ENCODE measurements at regions of chr10 and their contacts with region 1.

Region 1: GRCh38 chr10:73358331-73359279 is at the start of gene CFAP70:
- DNase-seq: peak; percentile 79 to 97 (median 95)
- ATAC-seq: peak; percentile 97
- H3K4me3 ChIP-seq: peak within 1 kb of the TSS; percentile 70
- H3K4me3 Mint-ChIP-seq: peak within 1 kb of the TSS; percentile 91 to 99 (median 94)
- H3K27ac ChIP-seq: peak within 1 kb of the TSS; percentile 85
- H3K27ac Mint-ChIP-seq: peak within 1 kb of the TSS; percentile 92 to 99 (median 97)
- H3K4me1 ChIP-seq: peaks cover 4 to 5% of the 10 kb centered on the region in 2 donors
- H3K4me1 Mint-ChIP-seq: peaks cover 11 to 20% (median 18%) of the 10 kb centered on the region in 7 donors
- H3K27me3 ChIP-seq: no peaks in the 10 kb centered on the region
- H3K27me3 Mint-ChIP-seq: peaks cover 0 to 23% (median 0%) of the 10 kb centered on the region in 5 donors
- total RNA-seq, gene CFAP70: 0.80 to 5.4 (median 4.6) TPM

Region 2: DNA sequence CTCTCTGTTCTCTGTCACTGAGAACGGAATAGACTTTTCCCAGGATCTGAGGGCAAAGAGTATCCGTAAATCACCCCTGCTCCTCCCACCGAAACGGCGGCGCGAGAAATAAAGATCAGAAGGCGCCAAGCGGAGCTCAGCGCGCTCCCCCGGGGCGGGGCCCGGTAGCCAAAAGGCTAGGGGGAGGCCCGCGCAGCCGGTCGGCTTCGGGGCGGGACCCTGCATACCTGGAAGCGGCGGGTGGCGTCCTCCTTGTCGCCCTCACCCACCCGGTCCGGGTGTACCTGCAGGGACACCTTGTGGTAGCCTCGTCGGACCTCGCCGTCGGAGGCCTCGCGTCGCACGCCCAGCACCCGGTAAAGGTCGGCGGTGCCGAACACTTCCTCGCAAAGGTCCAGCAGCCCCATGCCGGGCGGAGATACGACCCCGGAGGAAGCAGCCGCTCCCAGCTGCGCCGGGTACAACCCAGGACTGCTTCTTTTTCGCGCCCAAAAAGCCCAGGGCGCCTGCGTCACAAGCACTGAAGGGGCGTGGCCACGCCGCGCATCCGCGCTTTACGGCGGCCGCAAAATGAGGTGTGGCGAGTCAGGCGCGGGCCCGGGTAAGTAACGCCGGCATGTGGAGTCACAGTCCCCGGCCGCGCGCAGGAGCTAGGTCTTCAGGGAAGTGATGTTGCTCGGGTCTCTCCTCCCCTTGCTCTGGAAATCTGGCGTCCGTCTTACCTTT is 111.7 kb before region 1 on chr10 and contains the start of gene DNAJC9:
- CTCF ChIA-PET with region 1: no interaction called
- POLR2A ChIA-PET with region 1: interaction called, 13 read pairs
- intact Hi-C with region 1: loop called (anchors 1 to 2 kb)
- DNase-seq: peak; percentile 93 to 98 (median 96)
- ATAC-seq: peak; percentile 95
- H3K4me3 ChIP-seq: peak within 1 kb of the TSS; percentile 71
- H3K4me3 Mint-ChIP-seq: peak within 1 kb of the TSS; percentile 92 to 100 (median 97)
- H3K27ac ChIP-seq: peak within 1 kb of the TSS; percentile 86
- H3K27ac Mint-ChIP-seq: peak within 1 kb of the TSS; percentile 91 to 98 (median 96)
- H3K4me1 ChIP-seq: peaks cover 27 to 37% of the 10 kb centered on the region in 2 donors
- H3K4me1 Mint-ChIP-seq: peaks cover 30 to 69% (median 55%) of the 10 kb centered on the region in 7 donors
- H3K27me3 ChIP-seq: no peaks in the 10 kb centered on the region
- H3K27me3 Mint-ChIP-seq: no peaks in the 10 kb centered on the region
- total RNA-seq, gene DNAJC9: 14.5 to 47.7 (median 26.8) TPM

Region 3: GRCh38 chr10:73252445-73253224 is 106.0 kb before region 1 on chr10 and contains the start of gene MRPS16:
- CTCF ChIA-PET with region 1: no interaction called
- POLR2A ChIA-PET with region 1: interaction called, 13 read pairs
- intact Hi-C with region 1: loop called (anchors 1 to 2 kb)
- DNase-seq: peak; percentile 75 to 95 (median 93)
- ATAC-seq: peak; percentile 98
- H3K4me3 ChIP-seq: peak within 1 kb of the TSS; percentile 94
- H3K4me3 Mint-ChIP-seq: peak within 1 kb of the TSS; percentile 95 to 100 (median 99)
- H3K27ac ChIP-seq: peak within 1 kb of the TSS; percentile 92
- H3K27ac Mint-ChIP-seq: peak within 1 kb of the TSS; percentile 91 to 97 (median 94)
- H3K4me1 ChIP-seq: peaks cover 18 to 26% of the 10 kb centered on the region in 2 donors
- H3K4me1 Mint-ChIP-seq: peaks cover 19 to 50% (median 37%) of the 10 kb centered on the region in 7 donors
- H3K27me3 ChIP-seq: no peaks in the 10 kb centered on the region
- H3K27me3 Mint-ChIP-seq: peaks cover 0 to 2% (median 0%) of the 10 kb centered on the region in 5 donors
- total RNA-seq, gene MRPS16: 29.6 to 99.9 (median 47.6) TPM

Region 4: DNA sequence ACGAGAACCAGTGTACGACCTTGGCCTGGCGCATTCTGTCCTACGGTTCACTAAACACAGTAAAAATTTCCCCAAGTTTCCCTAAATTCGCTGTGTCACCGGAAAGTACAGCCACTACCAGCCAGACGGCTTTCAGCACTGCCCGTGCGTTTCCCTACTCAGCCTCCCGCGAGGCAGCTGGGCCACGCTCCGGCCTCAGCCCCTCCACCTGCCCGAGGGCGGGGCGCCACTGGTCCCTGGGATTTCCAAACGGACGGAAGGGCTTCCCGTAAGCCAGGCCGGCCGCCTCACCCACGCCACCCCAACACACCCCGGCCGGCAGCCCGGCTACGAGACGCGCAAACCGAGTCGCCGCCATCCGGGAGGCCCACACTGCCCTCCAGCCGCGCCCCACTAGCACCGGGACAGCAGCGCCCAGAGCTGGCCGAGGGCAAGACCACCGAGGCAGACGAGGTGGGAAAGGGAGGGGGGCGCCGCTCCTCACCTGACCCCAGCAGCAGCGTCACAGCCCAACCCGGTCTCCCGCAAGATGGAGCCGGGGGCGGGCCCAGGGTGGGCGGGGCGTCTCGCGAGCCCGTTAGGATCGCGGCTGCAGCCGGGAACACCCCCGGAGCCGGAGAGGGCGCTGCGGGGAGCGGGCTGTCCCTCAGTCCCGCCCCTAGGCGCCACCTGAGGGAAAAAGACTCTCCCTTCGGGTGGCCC is 55.1 kb after region 1 on chr10 and contains the start of gene ANXA7:
- CTCF ChIA-PET with region 1: no interaction called
- POLR2A ChIA-PET with region 1: interaction called, 7 read pairs
- intact Hi-C with region 1: loop called (anchors 1 kb)
- DNase-seq: peak; percentile 78 to 93 (median 85)
- ATAC-seq: peak; percentile 99
- H3K4me3 ChIP-seq: peak within 1 kb of the TSS; percentile 78
- H3K4me3 Mint-ChIP-seq: peak within 1 kb of the TSS; percentile 82 to 97 (median 94)
- H3K27ac ChIP-seq: peak within 1 kb of the TSS; percentile 98
- H3K27ac Mint-ChIP-seq: peak within 1 kb of the TSS; percentile 83 to 95 (median 90)
- H3K4me1 ChIP-seq: peaks cover 8 to 16% of the 10 kb centered on the region in 2 donors
- H3K4me1 Mint-ChIP-seq: peaks cover 39 to 60% (median 53%) of the 10 kb centered on the region in 7 donors
- H3K27me3 ChIP-seq: no peaks in the 10 kb centered on the region
- H3K27me3 Mint-ChIP-seq: peaks cover 0 to 4% (median 0%) of the 10 kb centered on the region in 5 donors
- total RNA-seq, gene ANXA7: 74.8 to 118 (median 97.3) TPM

Region 5: GRCh38 chr10:75008952-75009351 is 1650.3 kb after region 1 on chr10:
- CTCF ChIA-PET with region 1: no interaction called
- POLR2A ChIA-PET with region 1: no interaction called
- intact Hi-C with region 1: no loop called
- DNase-seq: peak in 1 of 9 donors; percentile 10
- ATAC-seq: peak; percentile 40
- H3K4me3 ChIP-seq: no peak overlapping the region
- H3K4me3 Mint-ChIP-seq: peak overlapping the region in 9 of 10 donors; percentile 8 to 83 (median 47)
- H3K27ac ChIP-seq: peak overlapping the region; percentile 0
- H3K27ac Mint-ChIP-seq: peak overlapping the region in 8 of 9 donors; percentile 42 to 93 (median 79)
- H3K4me1 ChIP-seq: peaks cover 8 to 20% of the 10 kb centered on the region in 2 donors
- H3K4me1 Mint-ChIP-seq: peaks cover 25 to 59% (median 45%) of the 10 kb centered on the region in 7 donors
- H3K27me3 ChIP-seq: no peaks in the 10 kb centered on the region
- H3K27me3 Mint-ChIP-seq: no peaks in the 10 kb centered on the region

Measured in naive thymus-derived CD4-positive, alpha-beta T cell (primary cell).